Caco-2 (cell line): ENCODE measurements at regions of chr7 and their contacts with region 1.

Region 1: GRCh38 chr7:153457746-153458145 is 594.5 kb upstream of the DPP6 start:
- DNase-seq: no peak
- H3K4me3 ChIP-seq: no peak overlapping the region
- H3K4me3 Mint-ChIP-seq: no peak overlapping the region
- H3K27ac Mint-ChIP-seq: no peak overlapping the region
- H3K4me1 ChIP-seq: no peaks in the 10 kb centered on the region
- H3K4me1 Mint-ChIP-seq: no peaks in the 10 kb centered on the region
- H3K27me3 ChIP-seq: no peaks in the 10 kb centered on the region
- H3K27me3 Mint-ChIP-seq: peaks cover 3% of the 10 kb centered on the region
- CTCF ChIP-seq: no peak

Region 2: GRCh38 chr7:153934629-153935028 is 476.9 kb after region 1 on chr7:
- CTCF ChIA-PET with region 1: no interaction called
- POLR2A ChIA-PET with region 1: interaction called, 10 read pairs
- intact Hi-C with region 1: no loop called
- DNase-seq: no peak
- H3K4me3 ChIP-seq: no peak overlapping the region
- H3K4me3 Mint-ChIP-seq: no peak overlapping the region
- H3K27ac Mint-ChIP-seq: no peak overlapping the region
- H3K4me1 ChIP-seq: no peaks in the 10 kb centered on the region
- H3K4me1 Mint-ChIP-seq: no peaks in the 10 kb centered on the region
- H3K27me3 ChIP-seq: no peaks in the 10 kb centered on the region
- H3K27me3 Mint-ChIP-seq: no peaks in the 10 kb centered on the region
- CTCF ChIP-seq: no peak